ENCODE measurements at regions of chr10 and their contacts with region 1.

Region 1: DNA sequence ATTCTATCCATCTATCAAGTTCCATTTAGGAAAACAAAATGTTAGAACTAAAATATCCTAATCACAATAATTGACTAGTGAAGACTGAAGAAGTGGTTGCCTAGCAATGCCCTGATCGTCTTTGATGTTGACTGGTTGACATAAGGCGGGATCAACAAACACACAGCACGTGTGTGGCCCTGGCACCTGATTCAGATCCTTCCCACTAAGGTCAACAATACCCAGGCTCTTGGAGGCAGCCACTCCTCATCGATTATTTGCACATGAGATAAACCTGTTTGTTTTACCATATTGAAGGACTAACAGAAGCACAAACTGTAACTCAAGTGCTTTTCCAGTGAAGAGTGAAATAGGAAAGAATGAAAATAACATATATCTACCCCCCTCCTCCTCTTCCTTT is 15.6 kb downstream of the FANK1 start:
- DNase-seq: peak; percentile 22
- ATAC-seq: peak; percentile 61
- H3K4me3 ChIP-seq: no peak overlapping the region
- H3K27ac ChIP-seq: no peak overlapping the region
- H3K4me1 ChIP-seq: 0 out of 2 replicates have a peak, but pooled peaks cover 6% of the 10 kb centered on the region
- H3K27me3 ChIP-seq: no peaks in the 10 kb centered on the region
- CTCF ChIP-seq: no peak

Region 2: GRCh38 chr10:125822878-125823662 is 88.9 kb before region 1 on chr10 and contains the starts of genes BCCIP and UROS:
- CTCF ChIA-PET with region 1: no interaction called
- POLR2A ChIA-PET with region 1: no interaction called
- intact Hi-C with region 1: no loop called
- DNase-seq: peak; percentile 75
- ATAC-seq: peak; percentile 65
- H3K4me3 ChIP-seq: peak within 1 kb of the TSS; percentile 100
- H3K27ac ChIP-seq: peak within 1 kb of the TSS; percentile 79
- H3K4me1 ChIP-seq: peaks cover 23% of the 10 kb centered on the region
- H3K27me3 ChIP-seq: no peaks in the 10 kb centered on the region
- CTCF ChIP-seq: no peak
- total RNA-seq, gene BCCIP: 64.8 and 81.5 TPM in 2 replicates
- total RNA-seq, gene UROS: 45.6 and 50.6 TPM in 2 replicates

Region 3: DNA sequence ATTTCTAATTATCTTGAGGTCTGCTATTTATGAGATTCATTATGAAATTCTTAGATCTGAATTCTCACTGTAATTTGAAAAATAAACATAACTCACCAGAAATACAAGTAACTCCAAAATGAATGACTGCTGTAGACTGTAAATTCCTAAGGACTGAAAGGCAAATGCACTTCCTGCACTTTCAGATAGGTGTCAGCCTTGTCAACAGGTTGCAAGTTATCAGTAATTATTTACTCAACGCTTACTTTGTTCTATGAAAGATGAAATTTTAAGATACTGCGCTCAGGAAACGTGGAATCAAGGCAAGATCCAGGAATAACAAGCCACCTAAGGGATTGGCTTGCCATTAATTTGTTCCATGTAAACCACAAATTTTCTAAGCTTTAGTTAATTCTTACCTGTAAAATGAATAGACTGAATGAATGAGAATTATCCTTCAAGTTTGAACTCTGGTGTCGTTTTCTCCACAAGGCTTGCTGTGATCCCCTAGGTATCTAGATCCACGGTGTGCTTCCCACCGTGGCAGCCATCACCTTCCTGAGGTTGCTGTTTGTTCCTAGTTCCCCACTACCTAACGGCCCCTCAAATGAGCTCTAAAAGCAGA is 43.5 kb before region 1 on chr10:
- CTCF ChIA-PET with region 1: no interaction called
- POLR2A ChIA-PET with region 1: no interaction called
- intact Hi-C with region 1: loop called (anchors 5 kb)
- DNase-seq: peak; percentile 74
- ATAC-seq: peak; percentile 67
- H3K4me3 ChIP-seq: no peak overlapping the region
- H3K27ac ChIP-seq: no peak overlapping the region
- H3K4me1 ChIP-seq: no peaks in the 10 kb centered on the region
- H3K27me3 ChIP-seq: no peaks in the 10 kb centered on the region
- CTCF ChIP-seq: peak; percentile 90

Region 4: DNA sequence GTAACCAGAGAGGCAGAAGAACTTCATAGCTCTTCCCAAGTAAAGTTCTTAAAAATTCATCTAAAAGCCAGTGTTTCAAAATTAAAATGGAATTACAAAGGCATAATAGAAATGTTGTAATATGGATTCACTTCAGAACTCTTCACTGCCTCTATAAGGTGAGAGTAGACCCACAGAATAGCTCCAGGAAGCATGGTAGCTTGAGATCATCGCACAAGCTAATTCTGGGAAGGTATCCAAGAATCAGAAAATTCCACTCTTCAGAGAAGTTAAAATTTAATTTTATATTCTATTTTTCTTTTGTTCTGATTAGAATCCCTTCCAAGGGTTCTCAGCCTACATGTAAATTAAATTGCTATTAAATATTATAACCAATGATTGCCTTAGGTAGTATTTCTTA is 29.4 kb before region 1 on chr10:
- CTCF ChIA-PET with region 1: no interaction called
- POLR2A ChIA-PET with region 1: interaction called, 21 read pairs
- intact Hi-C with region 1: no loop called
- DNase-seq: no peak
- ATAC-seq: no peak
- H3K4me3 ChIP-seq: no peak overlapping the region
- H3K27ac ChIP-seq: no peak overlapping the region
- H3K4me1 ChIP-seq: peaks cover 28% of the 10 kb centered on the region
- H3K27me3 ChIP-seq: no peaks in the 10 kb centered on the region
- CTCF ChIP-seq: no peak

Region 5: DNA sequence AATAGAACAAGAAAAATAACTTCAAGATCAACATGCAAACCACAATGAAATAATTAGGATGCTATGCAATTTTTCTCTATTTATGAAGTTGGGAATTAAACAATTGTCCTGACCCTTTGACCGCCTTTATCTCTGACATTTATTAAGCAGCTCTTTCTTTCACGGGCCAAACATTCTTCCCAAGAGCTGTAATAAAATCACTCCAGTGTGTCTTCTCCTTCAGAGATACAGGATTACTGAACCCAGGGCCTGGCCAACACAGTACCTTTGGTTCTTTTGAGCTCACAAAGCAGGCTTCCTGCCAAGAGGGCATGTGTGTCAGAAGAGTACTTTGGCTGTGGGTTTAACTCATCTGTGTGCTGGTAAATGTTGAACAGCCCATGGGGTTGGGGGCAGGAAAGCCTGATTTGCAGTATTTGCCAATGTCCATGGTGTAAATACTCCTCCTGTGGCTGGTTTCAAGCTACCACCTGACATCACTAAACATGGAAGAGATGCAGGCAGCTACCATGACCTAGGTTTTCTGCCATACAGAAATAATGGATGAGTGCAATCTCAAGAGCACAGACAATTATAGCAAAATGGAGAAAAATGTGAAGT is 106.1 kb after region 1 on chr10:
- CTCF ChIA-PET with region 1: no interaction called
- POLR2A ChIA-PET with region 1: no interaction called
- intact Hi-C with region 1: no loop called
- DNase-seq: peak; percentile 3
- ATAC-seq: no peak
- H3K4me3 ChIP-seq: no peak overlapping the region
- H3K27ac ChIP-seq: no peak overlapping the region
- H3K4me1 ChIP-seq: peaks cover 35% of the 10 kb centered on the region
- H3K27me3 ChIP-seq: no peaks in the 10 kb centered on the region
- CTCF ChIP-seq: no peak